ENCODE measurements at regions of chr17 and their contacts with region 1.

Region 1: DNA sequence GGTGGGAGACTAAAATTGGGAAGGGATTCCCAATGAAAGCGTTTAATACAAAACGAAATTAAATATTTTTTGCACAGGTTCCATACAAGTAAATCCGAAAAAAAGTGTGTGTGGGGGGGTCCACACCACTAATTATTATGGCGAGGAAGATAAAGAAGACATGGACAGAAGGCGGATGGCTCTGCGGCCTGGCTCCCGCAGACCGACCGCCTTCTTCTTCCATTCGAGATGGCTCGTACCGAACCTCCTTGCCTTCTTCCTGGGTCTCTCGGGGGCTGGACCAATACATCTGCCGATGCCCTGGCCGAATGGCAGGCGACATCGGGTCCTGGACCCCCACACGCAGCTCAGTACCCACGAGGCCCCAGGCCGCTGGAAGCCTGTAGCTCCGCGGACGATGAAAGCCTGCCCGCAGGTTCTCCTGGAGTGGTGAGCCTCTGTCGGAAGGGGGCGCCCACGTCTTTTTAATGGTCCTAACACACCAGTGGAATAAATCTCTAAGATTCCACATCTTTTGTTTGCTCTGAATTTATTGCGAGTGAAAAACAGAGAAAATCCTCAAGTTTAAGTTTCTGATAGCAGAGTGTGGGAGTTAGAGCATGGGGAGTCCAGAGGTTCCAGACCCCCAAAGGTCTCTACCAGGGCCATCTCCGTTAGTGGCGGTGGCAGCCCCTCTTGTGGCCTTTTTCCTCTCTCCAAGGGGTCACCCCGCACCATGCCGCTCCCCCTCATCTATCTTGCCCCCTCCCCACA is 1.4 kb downstream of the PRAC2 start:
- DNase-seq: no peak
- H3K4me3 ChIP-seq: peak overlapping the region; percentile 10 to 17
- H3K27ac ChIP-seq: no peak overlapping the region
- H3K4me1 ChIP-seq: peaks cover 61% of the 10 kb centered on the region
- H3K27me3 ChIP-seq: peaks cover 19% of the 10 kb centered on the region
- CTCF ChIP-seq: peak; percentile 64 to 78 (median 68)
- POLR2A ChIP-seq: no peak

Region 2: DNA sequence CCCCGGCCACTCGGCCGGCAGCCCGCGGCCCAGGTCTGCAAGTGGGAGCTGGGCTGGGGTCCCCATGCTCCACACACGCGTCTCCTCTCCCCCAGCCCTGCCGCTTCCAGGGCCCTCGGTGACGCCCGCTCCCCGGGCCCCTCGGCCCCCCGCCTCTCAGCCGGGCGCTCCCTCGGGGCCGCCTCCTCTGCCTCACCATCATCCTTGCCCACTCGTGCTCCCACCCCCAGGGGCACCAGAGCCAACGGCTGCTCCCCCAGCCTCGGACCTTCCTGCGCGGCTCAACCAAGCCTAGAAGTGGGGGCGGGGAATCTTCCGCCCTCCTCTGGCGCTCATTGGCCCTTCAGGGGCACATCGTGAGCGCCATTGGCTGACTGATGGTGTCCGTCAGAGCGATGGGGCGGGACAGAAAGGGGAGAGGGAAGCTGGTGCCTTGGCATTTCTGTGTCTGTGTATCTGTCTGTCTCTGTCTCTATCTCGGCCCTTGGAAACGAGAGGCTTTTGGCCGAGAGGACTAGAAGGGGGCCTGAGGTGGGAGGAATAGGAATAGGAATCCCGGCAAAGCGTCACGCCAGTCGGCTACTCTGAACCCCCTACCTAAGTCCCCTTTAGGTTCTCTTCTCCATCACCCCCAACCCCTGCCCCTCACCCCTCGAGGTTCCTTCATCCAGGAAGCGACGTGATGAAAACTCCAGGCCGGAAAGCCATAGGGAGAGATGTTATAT is 1624.3 kb before region 1 on chr17:
- intact Hi-C with region 1: no loop called
- DNase-seq: peak in 1 of 2 donors; percentile 92
- H3K4me3 ChIP-seq: peak overlapping the region; percentile 88 to 92
- H3K27ac ChIP-seq: peak overlapping the region; percentile 86
- H3K4me1 ChIP-seq: peaks cover 24% of the 10 kb centered on the region
- H3K27me3 ChIP-seq: no peaks in the 10 kb centered on the region
- CTCF ChIP-seq: no peak
- POLR2A ChIP-seq: peak in 1 of 2 donors; percentile 29

Region 3: DNA sequence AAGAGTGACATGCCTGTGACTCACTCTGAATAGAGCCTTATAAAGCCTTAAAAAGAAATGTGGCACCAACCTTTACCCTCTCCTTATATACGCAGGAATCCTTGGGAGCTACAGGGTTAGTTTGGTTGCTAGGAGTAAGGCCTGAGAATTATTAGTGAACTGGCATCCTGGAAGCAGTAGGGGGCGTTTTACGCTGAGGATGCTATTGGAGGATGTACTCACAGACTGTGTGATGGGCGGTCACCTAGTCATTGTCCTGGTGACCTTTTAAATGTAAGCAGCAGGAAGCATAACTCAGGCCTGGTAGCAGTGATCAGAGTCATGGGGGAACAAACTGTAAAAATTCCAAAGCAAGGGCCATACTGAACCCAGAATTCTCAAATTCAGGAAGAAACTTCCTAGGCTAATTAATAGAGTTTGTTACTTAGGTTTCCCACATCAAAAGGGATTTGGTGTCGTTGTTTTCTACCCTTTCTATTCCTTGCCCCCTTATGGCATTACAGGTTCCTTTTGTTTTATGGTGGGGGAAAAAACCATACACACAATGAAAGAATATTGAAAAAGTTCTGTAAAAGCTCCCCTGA is 463.0 kb before region 1 on chr17:
- intact Hi-C with region 1: no loop called
- DNase-seq: no peak
- H3K4me3 ChIP-seq: no peak overlapping the region
- H3K27ac ChIP-seq: no peak overlapping the region
- H3K4me1 ChIP-seq: no peaks in the 10 kb centered on the region
- H3K27me3 ChIP-seq: no peaks in the 10 kb centered on the region
- CTCF ChIP-seq: no peak
- POLR2A ChIP-seq: no peak

Region 4: DNA sequence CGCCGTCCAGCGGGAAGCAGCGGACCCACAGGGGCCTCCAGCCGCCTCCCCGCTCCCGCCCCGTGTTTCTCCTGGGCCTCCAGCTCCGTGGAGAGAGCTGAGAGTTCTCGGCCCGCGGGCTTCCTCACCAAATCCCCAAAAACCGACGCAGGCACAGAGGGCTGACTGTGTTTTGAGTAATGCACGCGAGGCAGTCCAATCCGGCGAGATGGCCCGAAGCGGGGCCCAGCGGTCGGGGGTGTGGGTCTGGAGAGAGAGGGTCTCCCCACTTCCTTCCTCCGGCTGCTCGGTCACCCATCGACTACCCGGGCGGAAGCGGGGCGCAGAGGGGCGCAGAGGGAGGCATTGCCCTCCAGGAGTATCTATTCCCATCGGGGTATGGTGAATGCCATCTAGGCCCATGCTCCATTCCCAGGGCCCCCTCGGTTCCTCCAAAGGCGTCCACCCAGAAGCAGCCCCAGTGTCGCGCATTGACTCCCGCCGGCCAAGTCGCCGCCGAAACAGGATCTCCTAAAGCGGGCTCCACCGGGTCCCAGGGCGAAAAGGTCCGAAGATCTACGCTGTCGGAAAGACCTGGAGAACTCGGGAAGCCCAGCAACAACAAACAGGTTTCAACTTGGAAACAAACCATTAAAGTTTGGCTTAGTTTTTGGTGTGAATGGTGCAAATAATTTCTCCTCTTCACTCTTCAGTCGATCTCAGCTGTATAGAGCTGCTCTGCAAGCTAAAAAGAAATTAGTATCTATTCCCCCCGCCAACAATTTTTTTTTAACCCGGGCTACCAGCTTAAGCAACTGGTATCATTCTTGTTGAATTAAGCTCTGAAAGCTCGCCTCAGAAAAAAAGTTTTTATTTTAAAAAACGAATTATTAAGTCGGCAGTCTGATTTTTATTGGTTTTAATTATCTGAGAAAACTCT is 23.3 kb after region 1 on chr17:
- intact Hi-C with region 1: loop called (anchors 2 kb)
- DNase-seq: no peak
- H3K4me3 ChIP-seq: peak overlapping the region in 1 of 2 donors; percentile 26
- H3K27ac ChIP-seq: peak overlapping the region; percentile 72
- H3K4me1 ChIP-seq: peaks cover 36% of the 10 kb centered on the region
- H3K27me3 ChIP-seq: peaks cover 25% of the 10 kb centered on the region
- CTCF ChIP-seq: no peak
- POLR2A ChIP-seq: no peak

Region 5: GRCh38 chr17:48799069-48799723 is 74.8 kb after region 1 on chr17:
- intact Hi-C with region 1: loop called (anchors 1 kb)
- DNase-seq: no peak
- H3K4me3 ChIP-seq: no peak overlapping the region
- H3K27ac ChIP-seq: no peak overlapping the region
- H3K4me1 ChIP-seq: peaks cover 9% of the 10 kb centered on the region
- H3K27me3 ChIP-seq: no peaks in the 10 kb centered on the region
- CTCF ChIP-seq: no peak
- POLR2A ChIP-seq: no peak

Region 6: GRCh38 chr17:48878918-48879898 is 154.8 kb after region 1 on chr17:
- intact Hi-C with region 1: loop called (anchors 5 kb)
- DNase-seq: no peak
- H3K4me3 ChIP-seq: no peak overlapping the region
- H3K27ac ChIP-seq: no peak overlapping the region
- H3K4me1 ChIP-seq: no peaks in the 10 kb centered on the region
- H3K27me3 ChIP-seq: no peaks in the 10 kb centered on the region
- CTCF ChIP-seq: peak; percentile 73 to 94 (median 82)
- POLR2A ChIP-seq: no peak

Measured in vagina (tissue), 2 donors.